ENCODE measurements at regions of chr2 and their contacts with region 1.

Region 1: GRCh38 chr2:69724540-69725159 is 17.3 kb upstream of the ANXA4 start:
- DNase-seq: peak; percentile 91

Region 2: GRCh38 chr2:69770193-69771146 is 45.8 kb after region 1 on chr2:
- intact Hi-C with region 1: loop called (anchors 5 kb)
- DNase-seq: no peak

Region 3: DNA sequence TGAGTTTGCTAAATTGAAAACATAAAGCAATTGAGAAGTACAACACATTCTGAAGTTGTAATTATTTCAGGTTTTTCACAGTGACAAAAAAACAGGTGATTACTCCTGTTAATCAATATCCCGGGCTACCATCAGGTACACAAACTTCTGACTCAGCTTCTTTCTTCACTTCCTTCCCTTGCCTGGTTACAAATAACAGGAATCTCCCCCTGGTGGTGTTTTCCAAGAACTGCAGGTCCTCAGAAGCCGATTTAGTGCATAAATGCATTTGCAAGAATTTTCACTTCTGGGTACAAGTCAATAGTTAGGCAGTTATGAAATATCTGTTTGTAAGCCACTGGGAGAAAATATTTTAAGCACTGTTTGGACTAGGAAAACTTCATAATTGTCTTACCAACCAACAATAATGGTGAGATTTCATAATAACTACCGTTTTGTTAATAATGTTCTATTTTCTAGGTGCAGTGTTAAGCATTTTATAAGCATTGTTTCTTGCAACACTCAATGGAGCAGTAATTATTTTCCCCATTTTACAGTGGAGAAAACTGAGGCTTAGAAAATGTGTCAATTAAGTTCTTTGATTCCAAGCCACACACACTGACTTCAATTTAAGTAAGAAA is 92.4 kb after region 1 on chr2:
- intact Hi-C with region 1: loop called (anchors 1 kb)
- DNase-seq: no peak

Region 4: GRCh38 chr2:69893684-69894551 is 169.3 kb after region 1 on chr2 and contains the start of gene SNRNP27:
- intact Hi-C with region 1: loop called (anchors 5 kb)
- DNase-seq: peak; percentile 89
- total RNA-seq, gene SNRNP27: 48.6 TPM

Region 5: DNA sequence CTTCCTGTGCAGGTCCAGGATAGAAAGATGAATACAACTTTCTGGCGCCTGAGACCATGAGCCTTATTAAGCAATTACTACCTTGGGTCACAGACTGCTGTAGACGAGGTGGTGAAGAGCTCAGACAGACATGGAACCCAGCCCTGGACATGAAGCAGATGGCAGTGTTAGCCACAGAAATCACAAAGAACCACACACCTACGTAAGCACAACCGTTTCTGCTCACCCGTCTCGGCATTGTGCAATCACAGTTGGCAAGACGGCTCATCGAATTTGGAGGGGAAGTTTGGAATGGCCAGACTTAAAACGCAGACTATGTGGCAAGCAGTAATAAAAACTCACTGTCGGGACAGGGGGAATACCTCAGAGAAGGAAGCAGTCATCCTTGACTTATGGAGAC is 261.0 kb after region 1 on chr2:
- intact Hi-C with region 1: no loop called
- DNase-seq: peak; percentile 89

Measured in cardiac septum (tissue), 1 donor.